ENCODE measurements at regions of chr2 and their contacts with region 1.

Region 1: GRCh38 chr2:173571021-173571882 is 216.6 kb downstream of the CDCA7 start:
- DNase-seq: peak in 1 of 2 donors; percentile 3
- ATAC-seq: no peak
- H3K4me3 ChIP-seq: no peak overlapping the region
- H3K4me3 Mint-ChIP-seq: no peak overlapping the region
- H3K27ac ChIP-seq: no peak overlapping the region
- H3K27ac Mint-ChIP-seq: no peak overlapping the region
- H3K4me1 ChIP-seq: no peaks in the 10 kb centered on the region
- H3K4me1 Mint-ChIP-seq: peaks cover 5 to 6% of the 10 kb centered on the region in 2 donors
- H3K27me3 ChIP-seq: no peaks in the 10 kb centered on the region
- H3K27me3 Mint-ChIP-seq: peaks cover 7 to 23% of the 10 kb centered on the region in 2 donors
- CTCF ChIP-seq: no peak

Region 2: DNA sequence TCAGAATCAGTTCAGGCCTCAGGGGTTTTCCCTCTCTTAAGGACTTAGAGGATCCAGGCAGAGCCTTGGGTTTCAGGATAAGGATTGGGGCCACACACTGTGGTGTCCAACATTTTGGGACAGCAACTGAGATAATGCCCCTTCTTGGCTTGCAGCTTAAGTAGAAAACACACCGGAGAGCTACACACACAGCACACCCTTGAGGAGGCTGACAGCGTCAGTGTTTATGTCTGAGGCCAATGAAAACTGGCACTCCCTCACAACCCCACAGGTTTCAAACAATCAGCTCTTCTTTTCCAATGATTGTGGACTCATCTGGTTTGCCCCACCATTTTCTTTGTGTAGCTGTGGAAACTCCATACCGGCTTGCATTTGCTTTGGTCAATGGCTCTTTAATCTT is 41.1 kb after region 1 on chr2:
- intact Hi-C with region 1: loop called (anchors 2 kb)
- DNase-seq: no peak
- ATAC-seq: no peak
- H3K4me3 ChIP-seq: no peak overlapping the region
- H3K4me3 Mint-ChIP-seq: no peak overlapping the region
- H3K27ac ChIP-seq: no peak overlapping the region
- H3K27ac Mint-ChIP-seq: no peak overlapping the region
- H3K4me1 ChIP-seq: no peaks in the 10 kb centered on the region
- H3K4me1 Mint-ChIP-seq: no peaks in the 10 kb centered on the region
- H3K27me3 ChIP-seq: no peaks in the 10 kb centered on the region
- H3K27me3 Mint-ChIP-seq: peaks cover 5 to 35% of the 10 kb centered on the region in 2 donors
- CTCF ChIP-seq: no peak

Region 3: GRCh38 chr2:173623438-173624319 is 52.4 kb after region 1 on chr2:
- intact Hi-C with region 1: no loop called
- DNase-seq: no peak
- ATAC-seq: no peak
- H3K4me3 ChIP-seq: no peak overlapping the region
- H3K4me3 Mint-ChIP-seq: no peak overlapping the region
- H3K27ac ChIP-seq: no peak overlapping the region
- H3K27ac Mint-ChIP-seq: no peak overlapping the region
- H3K4me1 ChIP-seq: no peaks in the 10 kb centered on the region
- H3K4me1 Mint-ChIP-seq: no peaks in the 10 kb centered on the region
- H3K27me3 ChIP-seq: no peaks in the 10 kb centered on the region
- H3K27me3 Mint-ChIP-seq: peaks cover 6 to 10% of the 10 kb centered on the region in 2 donors
- CTCF ChIP-seq: no peak